Activated CD8-positive, alpha-beta T cell treated with anti-CD3 and anti-CD28 coated beads for 36 hours (primary cell): ENCODE measurements at regions of chr17 and their contacts with region 1.

Region 1: DNA sequence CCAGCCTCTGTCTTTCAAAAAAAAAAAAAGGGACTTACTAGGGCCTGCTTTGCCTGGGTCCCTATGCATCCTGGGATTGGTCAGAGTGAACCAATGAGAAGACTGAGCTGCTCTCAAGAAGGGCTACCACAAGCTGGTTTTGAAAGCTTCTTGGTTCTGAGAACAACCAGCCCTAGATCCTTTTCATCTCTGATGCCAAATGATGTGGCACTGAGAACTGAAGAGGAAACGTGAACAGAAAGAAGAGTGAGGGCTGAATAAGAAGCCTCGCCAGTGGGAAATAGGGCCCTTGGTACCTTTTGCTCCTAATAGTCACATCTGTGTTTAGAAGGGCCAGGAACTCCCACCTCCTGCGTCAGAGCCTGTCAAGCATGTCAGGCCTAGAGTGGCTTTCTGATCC is 10.7 kb downstream of the TACO1 start:
- DNase-seq: peak; percentile 48
- ATAC-seq: peak; percentile 81
- H3K4me3 Mint-ChIP-seq: no peak overlapping the region
- H3K27ac Mint-ChIP-seq: peak overlapping the region; percentile 84
- H3K4me1 Mint-ChIP-seq: peaks cover 29% of the 10 kb centered on the region
- H3K27me3 Mint-ChIP-seq: no peaks in the 10 kb centered on the region
- CTCF ChIP-seq: no peak

Region 2: DNA sequence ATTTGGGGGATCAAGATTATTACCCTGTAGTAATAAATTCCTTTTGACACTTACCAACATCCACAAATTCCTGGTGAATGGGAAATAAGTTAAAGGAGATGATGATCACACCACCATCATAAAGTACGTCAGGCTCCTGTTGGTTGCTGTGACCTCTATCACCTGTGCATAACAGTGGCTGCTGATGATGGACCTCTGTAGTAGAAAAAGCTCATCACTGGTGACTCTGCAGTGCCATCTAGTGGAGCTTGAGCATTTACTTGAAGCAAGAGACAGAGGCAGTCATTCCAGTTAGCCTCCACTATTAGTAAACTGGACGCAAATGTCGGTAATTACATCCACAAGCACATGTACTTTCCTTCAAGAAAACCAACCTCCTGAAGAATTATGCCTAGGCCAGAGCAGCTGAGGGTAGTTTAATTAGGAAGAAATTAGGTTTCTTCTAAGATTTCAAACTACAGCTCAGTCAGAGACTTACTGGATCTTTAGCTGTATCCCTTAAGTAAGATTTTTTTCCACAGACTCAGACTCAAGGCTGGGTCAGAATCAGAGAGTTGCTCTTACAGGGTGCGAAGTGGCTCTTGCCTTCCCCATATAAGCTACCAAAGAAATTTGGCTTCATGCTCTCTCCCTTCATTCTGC is 204.5 kb before region 1 on chr17:
- CTCF ChIA-PET with region 1: interaction called, 11 read pairs
- POLR2A ChIA-PET with region 1: no interaction called
- intact Hi-C with region 1: no loop called
- DNase-seq: peak; percentile 87
- ATAC-seq: peak; percentile 87
- H3K4me3 Mint-ChIP-seq: no peak overlapping the region
- H3K27ac Mint-ChIP-seq: no peak overlapping the region
- H3K4me1 Mint-ChIP-seq: peaks cover 3% of the 10 kb centered on the region
- H3K27me3 Mint-ChIP-seq: no peaks in the 10 kb centered on the region
- CTCF ChIP-seq: peak; percentile 79

Region 3: DNA sequence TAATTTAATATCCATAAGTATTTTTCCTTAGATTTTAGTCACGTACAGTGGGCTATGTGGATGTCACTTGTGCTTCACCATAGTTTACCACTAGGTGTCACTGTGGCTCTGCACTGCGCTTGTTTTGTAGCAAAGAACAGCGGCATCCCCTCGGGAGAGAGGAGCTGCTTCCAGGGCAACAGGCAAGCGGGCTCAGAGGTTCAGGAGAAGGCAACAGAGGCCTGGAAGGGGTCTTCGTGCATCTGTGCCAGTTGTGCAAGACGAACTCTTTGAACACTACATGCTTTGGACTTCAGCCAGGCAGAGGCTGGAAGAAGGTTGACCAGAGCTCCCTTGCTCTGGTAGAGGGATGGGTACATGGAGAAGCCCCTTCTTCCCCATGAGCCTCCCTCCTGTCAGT is 185.9 kb before region 1 on chr17:
- CTCF ChIA-PET with region 1: interaction called, 188 read pairs
- POLR2A ChIA-PET with region 1: interaction called, 10 read pairs
- intact Hi-C with region 1: loop called (anchors 2 kb)
- DNase-seq: peak; percentile 79
- ATAC-seq: peak; percentile 92
- H3K4me3 Mint-ChIP-seq: no peak overlapping the region
- H3K27ac Mint-ChIP-seq: no peak overlapping the region
- H3K4me1 Mint-ChIP-seq: peaks cover 28% of the 10 kb centered on the region
- H3K27me3 Mint-ChIP-seq: no peaks in the 10 kb centered on the region
- CTCF ChIP-seq: peak; percentile 97

Region 4: GRCh38 chr17:63478791-63479494 is 132.4 kb before region 1 on chr17:
- CTCF ChIA-PET with region 1: interaction called, 33 read pairs
- POLR2A ChIA-PET with region 1: no interaction called
- intact Hi-C with region 1: no loop called
- DNase-seq: peak; percentile 88
- ATAC-seq: peak; percentile 87
- H3K4me3 Mint-ChIP-seq: no peak overlapping the region
- H3K27ac Mint-ChIP-seq: no peak overlapping the region
- H3K4me1 Mint-ChIP-seq: peaks cover 10% of the 10 kb centered on the region
- H3K27me3 Mint-ChIP-seq: peaks cover 29% of the 10 kb centered on the region
- CTCF ChIP-seq: peak; percentile 74

Region 5: GRCh38 chr17:63568581-63568980 is 42.8 kb before region 1 on chr17:
- CTCF ChIA-PET with region 1: interaction called, 14 read pairs
- POLR2A ChIA-PET with region 1: interaction called, 3 read pairs
- intact Hi-C with region 1: no loop called
- DNase-seq: no peak
- ATAC-seq: no peak
- H3K4me3 Mint-ChIP-seq: no peak overlapping the region
- H3K27ac Mint-ChIP-seq: no peak overlapping the region
- H3K4me1 Mint-ChIP-seq: peaks cover 32% of the 10 kb centered on the region
- H3K27me3 Mint-ChIP-seq: no peaks in the 10 kb centered on the region
- CTCF ChIP-seq: no peak

Region 6: GRCh38 chr17:63621766-63622519 is 10.6 kb after region 1 on chr17 and contains the start of gene MAP3K3:
- CTCF ChIA-PET with region 1: interaction called, 79 read pairs
- POLR2A ChIA-PET with region 1: interaction called, 5 read pairs
- intact Hi-C with region 1: no loop called
- DNase-seq: peak; percentile 99
- ATAC-seq: peak; percentile 91
- H3K4me3 Mint-ChIP-seq: peak within 1 kb of the TSS; percentile 99
- H3K27ac Mint-ChIP-seq: peak within 1 kb of the TSS; percentile 95
- H3K4me1 Mint-ChIP-seq: peaks cover 38% of the 10 kb centered on the region
- H3K27me3 Mint-ChIP-seq: no peaks in the 10 kb centered on the region
- CTCF ChIP-seq: no peak
- total RNA-seq, gene MAP3K3: 20.6 to 22.5 TPM

Region 7: DNA sequence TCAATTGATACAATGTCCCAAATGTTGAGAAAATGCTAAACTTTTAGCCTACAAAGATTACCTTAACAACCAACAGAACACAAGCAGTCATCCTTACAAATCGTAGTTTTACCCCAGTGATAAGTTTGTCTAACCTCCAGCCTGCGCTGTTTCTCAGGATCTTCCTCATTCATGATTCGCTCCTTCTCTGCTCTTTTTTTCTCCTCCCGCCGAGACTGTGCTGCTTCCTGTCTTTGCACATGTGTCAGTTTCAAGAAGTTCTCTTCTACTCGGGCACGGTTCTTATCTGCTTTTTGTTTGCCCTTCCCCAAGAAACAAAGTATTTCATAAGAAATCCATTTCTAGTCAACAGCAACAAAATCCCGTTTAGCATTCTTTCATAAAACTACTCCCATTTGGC is 140.5 kb after region 1 on chr17:
- CTCF ChIA-PET with region 1: no interaction called
- POLR2A ChIA-PET with region 1: no interaction called
- intact Hi-C with region 1: no loop called
- DNase-seq: peak; percentile 43
- ATAC-seq: peak; percentile 73
- H3K4me3 Mint-ChIP-seq: peak overlapping the region; percentile 57
- H3K27ac Mint-ChIP-seq: peak overlapping the region; percentile 86
- H3K4me1 Mint-ChIP-seq: peaks cover 19% of the 10 kb centered on the region
- H3K27me3 Mint-ChIP-seq: no peaks in the 10 kb centered on the region
- CTCF ChIP-seq: no peak

Region 8: DNA sequence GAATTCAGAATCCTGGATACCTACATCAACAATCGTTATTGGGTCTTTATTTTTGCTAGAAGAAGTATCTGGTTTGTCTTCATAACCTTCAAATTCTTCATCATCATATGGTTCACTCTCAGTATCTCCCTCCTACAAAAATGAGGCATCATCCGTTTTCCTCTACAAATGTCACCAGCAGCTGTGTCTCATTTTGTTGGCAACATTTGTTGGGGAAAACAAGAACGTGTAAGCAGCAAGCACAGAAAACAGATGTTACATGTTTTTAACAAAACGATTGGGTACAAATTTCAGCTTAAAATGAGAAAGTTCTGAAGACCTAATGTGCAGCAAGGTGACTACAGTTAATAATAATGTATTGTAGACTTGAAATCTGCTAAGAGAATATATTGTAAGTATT is 153.4 kb after region 1 on chr17:
- CTCF ChIA-PET with region 1: no interaction called
- POLR2A ChIA-PET with region 1: no interaction called
- intact Hi-C with region 1: no loop called
- DNase-seq: no peak
- ATAC-seq: no peak
- H3K4me3 Mint-ChIP-seq: no peak overlapping the region
- H3K27ac Mint-ChIP-seq: peak overlapping the region; percentile 2
- H3K4me1 Mint-ChIP-seq: peaks cover 35% of the 10 kb centered on the region
- H3K27me3 Mint-ChIP-seq: no peaks in the 10 kb centered on the region
- CTCF ChIP-seq: no peak